ENCODE measurements at regions of chr13 and their contacts with region 1.

Region 1: GRCh38 chr13:26502826-26503225 is 54.7 kb upstream of the WASF3 start:
- DNase-seq: peak; percentile 74
- ATAC-seq: peak; percentile 99
- H3K4me3 Mint-ChIP-seq: no peak overlapping the region
- H3K27ac Mint-ChIP-seq: no peak overlapping the region
- H3K4me1 Mint-ChIP-seq: peaks cover 22% of the 10 kb centered on the region
- H3K27me3 Mint-ChIP-seq: no peaks in the 10 kb centered on the region

Region 2: GRCh38 chr13:26280295-26280694 is 222.5 kb before region 1 on chr13:
- CTCF ChIA-PET with region 1: no interaction called
- POLR2A ChIA-PET with region 1: no interaction called
- intact Hi-C with region 1: no loop called
- DNase-seq: no peak
- ATAC-seq: peak; percentile 49
- H3K4me3 Mint-ChIP-seq: no peak overlapping the region
- H3K27ac Mint-ChIP-seq: no peak overlapping the region
- H3K4me1 Mint-ChIP-seq: peaks cover 11% of the 10 kb centered on the region
- H3K27me3 Mint-ChIP-seq: no peaks in the 10 kb centered on the region

Region 3: GRCh38 chr13:26482451-26483197 is 20.2 kb before region 1 on chr13:
- CTCF ChIA-PET with region 1: interaction called, 46 read pairs
- POLR2A ChIA-PET with region 1: no interaction called
- intact Hi-C with region 1: no loop called
- DNase-seq: peak; percentile 78
- ATAC-seq: peak; percentile 83
- H3K4me3 Mint-ChIP-seq: no peak overlapping the region
- H3K27ac Mint-ChIP-seq: no peak overlapping the region
- H3K4me1 Mint-ChIP-seq: peaks cover 14% of the 10 kb centered on the region
- H3K27me3 Mint-ChIP-seq: no peaks in the 10 kb centered on the region